ENCODE measurements at regions of chr10 and their contacts with region 1.

Region 1: GRCh38 chr10:79347226-79347893 is at the start of gene PPIF:
- DNase-seq: peak; percentile 93
- H3K4me3 Mint-ChIP-seq: peak within 1 kb of the TSS; percentile 89
- H3K27ac Mint-ChIP-seq: peak within 1 kb of the TSS; percentile 95
- H3K4me1 Mint-ChIP-seq: peaks cover 36% of the 10 kb centered on the region
- H3K27me3 Mint-ChIP-seq: no peaks in the 10 kb centered on the region
- total RNA-seq, gene PPIF: 94.1 to 95.6 TPM

Region 2: DNA sequence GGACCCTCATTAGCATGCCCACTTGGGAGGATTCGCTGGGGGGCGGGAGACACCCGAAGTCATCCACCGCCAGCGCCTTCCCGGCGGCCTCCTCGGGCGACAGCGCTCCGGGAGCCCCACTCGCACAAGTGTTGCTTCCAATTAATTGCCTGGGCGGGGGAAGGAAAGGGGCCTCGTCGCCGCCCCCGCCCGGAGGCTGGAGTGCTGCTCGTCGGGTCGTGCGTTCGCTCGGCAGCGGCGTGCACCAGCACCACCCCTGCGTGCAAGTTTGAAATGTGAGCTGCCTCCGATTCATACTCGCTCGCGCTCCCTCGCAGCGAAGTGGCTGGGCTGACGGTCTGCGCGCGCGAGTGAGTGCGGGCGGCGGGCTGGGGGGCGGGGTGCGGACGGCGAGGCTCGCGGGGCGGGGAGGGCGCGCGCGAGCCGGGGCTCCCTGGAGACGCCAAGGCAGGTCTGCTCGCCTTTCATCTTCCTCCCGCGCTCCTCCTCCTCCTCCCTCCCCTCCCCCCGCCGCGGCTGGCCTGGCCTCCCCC is 104.7 kb before region 1 on chr10:
- CTCF ChIA-PET with region 1: interaction called, 4 read pairs
- intact Hi-C with region 1: loop called (anchors 1 kb)
- DNase-seq: peak; percentile 69
- H3K4me3 Mint-ChIP-seq: peak overlapping the region; percentile 78
- H3K27ac Mint-ChIP-seq: peak overlapping the region; percentile 56
- H3K4me1 Mint-ChIP-seq: peaks cover 45% of the 10 kb centered on the region
- H3K27me3 Mint-ChIP-seq: no peaks in the 10 kb centered on the region

Region 3: DNA sequence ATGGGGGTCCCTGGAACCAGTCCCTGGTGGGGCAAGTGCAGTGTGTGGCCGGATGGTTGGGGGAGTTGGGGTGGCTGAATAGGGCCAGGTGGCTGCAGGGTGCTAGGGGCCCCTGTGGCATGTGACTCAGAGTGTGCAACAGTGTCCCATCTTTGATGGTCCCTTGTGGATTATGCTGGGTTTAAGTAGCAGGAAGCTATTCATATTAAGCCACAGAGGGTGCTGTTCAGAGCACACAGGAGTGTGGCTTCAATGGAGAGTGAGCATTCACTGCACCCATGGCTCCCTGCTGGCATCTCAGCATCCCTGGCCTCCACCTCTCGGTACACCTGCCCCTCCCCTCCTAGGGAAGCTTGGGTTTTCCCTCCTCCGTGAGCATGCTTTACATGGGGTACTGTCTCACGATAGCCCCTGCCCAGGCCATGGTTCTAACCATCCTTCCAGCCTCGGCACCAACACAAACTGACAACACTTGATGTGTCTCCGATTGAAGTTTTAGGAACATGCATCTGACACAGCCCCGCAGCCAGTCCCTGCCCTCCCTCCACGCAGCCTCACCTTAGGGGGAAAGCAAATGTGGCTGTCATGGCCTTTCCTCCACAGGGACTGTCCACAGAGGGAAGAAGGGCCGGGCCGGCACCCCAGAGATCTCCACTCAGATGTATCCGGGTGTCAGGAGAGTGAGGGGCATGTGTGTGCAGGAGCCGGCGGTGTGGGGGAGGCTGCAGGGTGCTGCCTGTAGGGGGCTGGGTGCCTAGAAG is 30.5 kb before region 1 on chr10:
- CTCF ChIA-PET with region 1: interaction called, 20 read pairs
- intact Hi-C with region 1: loop called (anchors 1 kb)
- DNase-seq: peak; percentile 47
- H3K4me3 Mint-ChIP-seq: no peak overlapping the region
- H3K27ac Mint-ChIP-seq: peak overlapping the region; percentile 56
- H3K4me1 Mint-ChIP-seq: peaks cover 60% of the 10 kb centered on the region
- H3K27me3 Mint-ChIP-seq: peaks cover 2% of the 10 kb centered on the region

Region 4: DNA sequence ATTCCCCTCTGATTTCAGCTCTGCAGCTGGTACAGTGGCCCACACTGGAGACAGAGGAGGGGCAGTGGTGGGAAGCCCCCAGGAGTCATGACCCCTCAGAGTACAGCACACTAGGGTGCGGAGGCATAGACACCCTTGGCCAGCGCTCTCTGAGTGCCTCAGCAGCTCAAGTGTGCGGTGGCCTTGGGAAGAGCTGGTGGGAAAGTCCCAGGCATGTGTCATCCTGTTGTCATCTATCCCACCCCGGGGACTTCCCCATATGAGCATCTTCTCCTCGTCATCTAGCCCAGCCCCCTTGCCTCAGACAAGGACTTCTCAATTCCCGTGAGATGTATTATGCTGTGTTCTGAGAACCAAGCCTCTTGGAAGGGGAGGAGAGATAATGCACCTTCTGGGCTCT is 15.7 kb before region 1 on chr10:
- CTCF ChIA-PET with region 1: interaction called, 43 read pairs
- intact Hi-C with region 1: loop called (anchors 1 kb)
- DNase-seq: peak; percentile 95
- H3K4me3 Mint-ChIP-seq: peak overlapping the region; percentile 28
- H3K27ac Mint-ChIP-seq: peak overlapping the region; percentile 93
- H3K4me1 Mint-ChIP-seq: peaks cover 43% of the 10 kb centered on the region
- H3K27me3 Mint-ChIP-seq: no peaks in the 10 kb centered on the region

Region 5: DNA sequence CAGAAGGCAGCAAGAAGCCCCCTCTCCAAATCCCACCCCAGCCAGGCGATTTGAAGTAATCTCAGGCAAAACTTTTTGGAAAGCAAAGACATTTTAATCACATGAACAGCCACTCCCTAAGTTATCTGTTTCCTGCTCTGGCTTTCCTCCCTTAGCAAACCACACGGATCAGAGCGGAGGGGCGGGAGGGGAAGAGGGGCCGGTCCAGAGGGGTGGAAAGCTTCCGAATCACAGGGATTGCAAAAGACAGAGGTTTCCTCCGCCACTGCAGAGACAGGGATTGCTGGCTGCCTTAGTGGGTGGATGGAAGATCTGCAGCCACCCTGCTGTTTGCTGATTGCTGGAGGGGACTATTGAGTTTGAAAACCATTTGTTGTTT is 56.9 kb after region 1 on chr10:
- CTCF ChIA-PET with region 1: no interaction called
- intact Hi-C with region 1: no loop called
- DNase-seq: no peak
- H3K4me3 Mint-ChIP-seq: no peak overlapping the region
- H3K27ac Mint-ChIP-seq: no peak overlapping the region
- H3K4me1 Mint-ChIP-seq: no peaks in the 10 kb centered on the region
- H3K27me3 Mint-ChIP-seq: no peaks in the 10 kb centered on the region

Region 6: GRCh38 chr10:79445141-79445976 is 98.0 kb after region 1 on chr10 and contains the start of gene ZCCHC24:
- CTCF ChIA-PET with region 1: no interaction called
- intact Hi-C with region 1: loop called (anchors 1 kb)
- DNase-seq: peak; percentile 92
- H3K4me3 Mint-ChIP-seq: peak within 1 kb of the TSS; percentile 70
- H3K27ac Mint-ChIP-seq: no peak within 1 kb of the TSS
- H3K4me1 Mint-ChIP-seq: peaks cover 21% of the 10 kb centered on the region
- H3K27me3 Mint-ChIP-seq: peaks cover 12% of the 10 kb centered on the region
- total RNA-seq, gene ZCCHC24: 0.52 to 0.69 TPM

Measured in activated naive CD4-positive, alpha-beta T cell treated with anti-CD3 and anti-CD28 coated beads for 36 hours (primary cell).